IMR-90 (cell line): ENCODE measurements at regions of chr18 and their contacts with region 1.

Region 1: DNA sequence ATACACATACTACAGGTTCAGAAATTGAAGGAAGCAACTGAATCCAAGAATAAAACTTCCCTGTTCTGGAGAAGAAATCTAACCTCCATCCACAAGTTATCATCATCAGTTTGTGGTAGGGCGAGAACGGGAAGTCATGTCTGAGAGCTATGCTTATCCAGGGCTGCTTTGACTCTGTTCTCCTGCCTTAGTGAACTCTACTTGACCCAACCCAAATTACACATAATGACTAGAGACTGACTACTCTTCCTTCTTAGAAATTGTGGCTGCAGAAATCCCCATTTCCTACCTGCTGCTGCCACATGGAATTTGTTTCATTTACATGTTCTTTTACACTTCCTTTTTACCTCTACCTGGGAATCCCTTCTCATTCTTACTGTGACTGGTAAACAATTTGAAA is 1102.6 kb upstream of the PIK3C3 start:
- DNase-seq: no peak
- ATAC-seq: no peak
- H3K4me3 ChIP-seq: no peak overlapping the region
- H3K27ac ChIP-seq: no peak overlapping the region
- H3K4me1 ChIP-seq: no peaks in the 10 kb centered on the region
- H3K27me3 ChIP-seq: no peaks in the 10 kb centered on the region
- CTCF ChIP-seq: no peak
- POLR2A ChIP-seq: no peak
- RAD21 ChIP-seq: no peak

Region 2: DNA sequence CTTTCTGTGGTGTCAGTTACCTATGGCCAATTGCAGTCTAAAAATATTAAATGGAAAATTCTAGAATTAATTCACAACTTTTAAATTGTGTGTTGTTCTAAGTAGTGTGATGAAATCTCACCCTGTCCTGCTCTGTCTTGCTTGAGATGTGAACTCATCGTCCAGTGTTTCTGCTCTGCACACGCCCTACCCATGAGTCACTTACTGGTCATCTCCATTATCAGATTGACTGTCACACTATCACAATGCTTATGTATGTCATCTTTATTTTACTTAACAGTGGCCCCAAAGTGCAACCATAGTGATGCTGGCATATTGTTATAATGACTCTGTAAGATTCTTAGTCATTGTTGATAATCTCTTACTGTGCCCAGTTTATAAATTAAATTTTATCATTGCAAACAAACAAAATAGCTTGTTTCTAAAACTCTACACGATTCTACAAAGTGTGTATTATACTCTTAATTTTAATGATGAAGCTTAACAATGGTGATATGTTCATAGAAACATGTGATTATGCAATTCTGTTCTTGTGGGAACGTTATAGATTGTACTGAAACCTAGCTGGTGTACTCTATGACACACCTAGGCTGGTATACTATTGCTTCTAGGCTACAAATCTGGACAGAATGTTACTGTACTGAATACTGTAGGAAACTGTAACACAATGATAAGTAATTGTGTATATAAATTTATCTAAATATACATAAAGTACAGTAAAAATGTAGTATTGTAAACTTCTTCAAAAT is 15.9 kb after region 1 on chr18:
- CTCF ChIA-PET with region 1: no interaction called
- POLR2A ChIA-PET with region 1: no interaction called
- dilution Hi-C with region 1: no loop called
- in situ Hi-C with region 1: no loop called
- intact Hi-C with region 1: loop called (anchors 2 kb)
- DNase-seq: peak; percentile 96
- ATAC-seq: peak; percentile 90
- H3K4me3 ChIP-seq: no peak overlapping the region
- H3K27ac ChIP-seq: no peak overlapping the region
- H3K4me1 ChIP-seq: peaks cover 2% of the 10 kb centered on the region; the same call in 1 of the 2 replicates
- H3K27me3 ChIP-seq: no peaks in the 10 kb centered on the region
- CTCF ChIP-seq: no peak
- POLR2A ChIP-seq: no peak
- RAD21 ChIP-seq: no peak; the same call in 1 of the 2 replicates